HepG2 (cell line): ENCODE measurements at regions of chr3 and their contacts with region 1.

Region 1: GRCh38 chr3:187919048-187919447 is 173.8 kb upstream of the BCL6 start:
- DNase-seq: no peak
- ATAC-seq: no peak
- H3K4me3 ChIP-seq: no peak overlapping the region
- H3K27ac ChIP-seq: no peak overlapping the region
- H3K4me1 ChIP-seq: peaks cover 68% of the 10 kb centered on the region
- H3K27me3 ChIP-seq: no peaks in the 10 kb centered on the region; a peak in 1 of 5 replicates
- CTCF ChIP-seq: no peak
- EP300 ChIP-seq: no peak
- POLR2A ChIP-seq: no peak
- RAD21 ChIP-seq: no peak

Region 2: DNA sequence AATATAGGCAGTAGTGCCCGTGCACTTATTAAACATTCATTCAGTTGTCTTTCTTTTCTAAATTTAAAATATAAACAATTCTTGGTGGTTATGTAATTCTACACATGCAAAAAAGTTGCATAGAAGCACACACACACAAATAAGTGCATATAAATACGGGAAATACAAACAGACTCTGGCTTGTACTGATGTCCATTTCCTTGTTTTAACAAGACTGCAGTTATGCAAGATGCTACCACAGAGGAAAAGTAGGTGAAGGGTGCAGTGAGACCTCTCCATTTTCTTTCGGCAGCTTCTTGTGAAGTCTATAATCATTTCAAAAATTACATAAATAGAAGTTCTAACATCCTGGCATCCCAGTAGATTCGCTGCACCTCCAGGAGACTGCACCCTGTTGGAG is 43.2 kb before region 1 on chr3:
- CTCF ChIA-PET with region 1: no interaction called
- POLR2A ChIA-PET with region 1: no interaction called
- in situ Hi-C with region 1: no loop called
- intact Hi-C with region 1: loop called (anchors 1 kb)
- DNase-seq: no peak
- ATAC-seq: no peak
- H3K4me3 ChIP-seq: no peak overlapping the region
- H3K27ac ChIP-seq: no peak overlapping the region
- H3K4me1 ChIP-seq: peaks cover 19% of the 10 kb centered on the region
- H3K27me3 ChIP-seq: no peaks in the 10 kb centered on the region
- CTCF ChIP-seq: no peak
- EP300 ChIP-seq: no peak
- POLR2A ChIP-seq: no peak
- RAD21 ChIP-seq: no peak

Region 3: GRCh38 chr3:188006726-188007393 is 87.8 kb after region 1 on chr3:
- CTCF ChIA-PET with region 1: no interaction called
- POLR2A ChIA-PET with region 1: interaction called, 3 read pairs
- in situ Hi-C with region 1: no loop called
- intact Hi-C with region 1: loop called (anchors 10 kb)
- DNase-seq: no peak
- ATAC-seq: no peak
- H3K4me3 ChIP-seq: no peak overlapping the region
- H3K27ac ChIP-seq: no peak overlapping the region
- H3K4me1 ChIP-seq: peaks cover 53% of the 10 kb centered on the region
- H3K27me3 ChIP-seq: no peaks in the 10 kb centered on the region
- CTCF ChIP-seq: no peak
- EP300 ChIP-seq: no peak
- POLR2A ChIP-seq: no peak
- RAD21 ChIP-seq: no peak